WTC11 (cell line): ENCODE measurements at regions of chr1 and their contacts with region 1.

Region 1: GRCh38 chr1:41416552-41417334 is 55.5 kb downstream of the FOXO6 start:
- DNase-seq: peak; percentile 82
- ATAC-seq: peak; percentile 86
- H3K4me3 Mint-ChIP-seq: no peak overlapping the region
- H3K27ac Mint-ChIP-seq: no peak overlapping the region
- H3K4me1 Mint-ChIP-seq: peaks cover 15% of the 10 kb centered on the region
- H3K27me3 Mint-ChIP-seq: peaks cover 3% of the 10 kb centered on the region; the same call in 1 of the 2 replicates
- CTCF ChIP-seq: peak; percentile 76

Region 2: DNA sequence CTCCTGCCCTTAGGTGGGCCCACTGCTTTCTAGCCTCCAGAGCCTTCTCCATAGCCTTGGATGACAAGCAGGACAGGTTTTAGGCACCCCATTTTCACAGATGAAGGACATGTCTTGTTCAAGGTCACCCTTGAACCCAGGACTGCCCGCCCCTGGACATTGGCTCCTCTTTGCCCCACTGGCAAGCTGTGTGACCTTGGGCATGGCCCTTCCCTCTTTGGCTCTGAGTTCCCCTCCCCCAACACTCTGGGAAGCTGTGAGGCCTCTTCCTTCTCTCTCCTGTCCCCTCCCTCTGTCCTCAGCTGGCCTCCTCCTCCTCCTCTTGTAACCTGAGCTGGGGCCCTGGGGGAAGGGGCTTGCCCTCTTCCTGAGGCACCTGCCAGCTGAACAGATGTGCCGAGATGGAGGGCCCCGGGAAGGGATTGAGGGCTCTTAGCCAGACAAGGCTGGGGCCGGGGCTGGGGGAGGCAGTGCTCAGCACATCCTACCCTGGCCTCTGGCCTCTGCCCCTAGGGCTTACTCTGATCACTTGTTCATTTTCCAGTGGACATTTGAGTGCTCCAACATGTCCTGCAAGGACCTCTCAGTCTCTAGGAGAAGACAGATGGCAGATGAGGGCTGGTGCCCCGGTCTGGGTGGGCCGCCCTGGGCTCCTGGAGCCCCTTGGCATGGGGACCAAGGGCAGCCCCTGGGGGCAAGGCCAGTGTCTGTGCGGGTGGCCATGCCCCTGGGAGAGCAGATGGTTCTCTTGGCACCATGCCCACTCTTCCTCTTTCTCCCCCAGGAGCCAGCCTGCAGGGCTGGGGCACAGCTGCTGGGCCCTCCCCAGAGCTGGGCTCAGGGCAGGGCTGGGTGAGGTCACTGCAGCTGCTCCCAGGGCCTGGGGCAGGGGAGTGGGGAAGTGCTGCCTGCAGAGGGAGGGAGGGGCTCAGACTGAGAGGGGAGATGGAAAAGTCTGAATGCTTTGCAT is 44.8 kb before region 1 on chr1:
- CTCF ChIA-PET with region 1: interaction called, 10 read pairs
- POLR2A ChIA-PET with region 1: no interaction called
- DNase-seq: peak; percentile 87
- ATAC-seq: peak; percentile 91
- H3K4me3 Mint-ChIP-seq: peak overlapping the region; percentile 62
- H3K27ac Mint-ChIP-seq: peak overlapping the region; percentile 85; the same call in 1 of the 2 replicates
- H3K4me1 Mint-ChIP-seq: peaks cover 68% of the 10 kb centered on the region
- H3K27me3 Mint-ChIP-seq: peaks cover 31% of the 10 kb centered on the region
- CTCF ChIP-seq: no peak

Region 3: GRCh38 chr1:41404308-41404761 is 12.4 kb before region 1 on chr1:
- CTCF ChIA-PET with region 1: interaction called, 11 read pairs
- POLR2A ChIA-PET with region 1: no interaction called
- DNase-seq: peak; percentile 53
- ATAC-seq: peak; percentile 69
- H3K4me3 Mint-ChIP-seq: 0 out of 2 replicates have a peak overlapping the region, but pooled peaks have one; percentile 12
- H3K27ac Mint-ChIP-seq: no peak overlapping the region
- H3K4me1 Mint-ChIP-seq: peaks cover 39% of the 10 kb centered on the region
- H3K27me3 Mint-ChIP-seq: peaks cover 19% of the 10 kb centered on the region
- CTCF ChIP-seq: no peak

Region 4: GRCh38 chr1:41444246-41444645 is 27.5 kb after region 1 on chr1:
- CTCF ChIA-PET with region 1: no interaction called
- POLR2A ChIA-PET with region 1: no interaction called
- DNase-seq: no peak
- ATAC-seq: no peak
- H3K4me3 Mint-ChIP-seq: no peak overlapping the region
- H3K27ac Mint-ChIP-seq: no peak overlapping the region
- H3K4me1 Mint-ChIP-seq: no peaks in the 10 kb centered on the region; the same call in 1 of the 2 replicates
- H3K27me3 Mint-ChIP-seq: no peaks in the 10 kb centered on the region
- CTCF ChIP-seq: no peak